Activated CD4-positive, alpha-beta T cell treated with anti-CD3 and anti-CD28 coated beads, Interleukin-2, amount 10 ng/mL, durations not matched to agents 24 days and 14 days (primary cell): ENCODE measurements at regions of chr20 and their contacts with region 1.

Region 1: GRCh38 chr20:35954200-35954906 is at the start of gene SCAND1:
- DNase-seq: peak; percentile 99
- H3K4me3 Mint-ChIP-seq: peak within 1 kb of the TSS; percentile 100
- H3K27ac Mint-ChIP-seq: peak within 1 kb of the TSS; percentile 100
- H3K4me1 Mint-ChIP-seq: peaks cover 14% of the 10 kb centered on the region
- H3K27me3 Mint-ChIP-seq: peaks cover 5% of the 10 kb centered on the region
- total RNA-seq, gene SCAND1: 35.1 and 38.1 TPM in 2 replicates

Region 2: GRCh38 chr20:34363062-34363464 is 1591.3 kb before region 1 on chr20 and contains the start of gene ITCH:
- intact Hi-C with region 1: loop called (anchors 5 kb)
- DNase-seq: peak; percentile 98
- H3K4me3 Mint-ChIP-seq: peak within 1 kb of the TSS; percentile 95
- H3K27ac Mint-ChIP-seq: peak within 1 kb of the TSS; percentile 98
- H3K4me1 Mint-ChIP-seq: peaks cover 33% of the 10 kb centered on the region
- H3K27me3 Mint-ChIP-seq: no peaks in the 10 kb centered on the region
- total RNA-seq, gene ITCH: 55.6 and 55.7 TPM in 2 replicates

Region 3: DNA sequence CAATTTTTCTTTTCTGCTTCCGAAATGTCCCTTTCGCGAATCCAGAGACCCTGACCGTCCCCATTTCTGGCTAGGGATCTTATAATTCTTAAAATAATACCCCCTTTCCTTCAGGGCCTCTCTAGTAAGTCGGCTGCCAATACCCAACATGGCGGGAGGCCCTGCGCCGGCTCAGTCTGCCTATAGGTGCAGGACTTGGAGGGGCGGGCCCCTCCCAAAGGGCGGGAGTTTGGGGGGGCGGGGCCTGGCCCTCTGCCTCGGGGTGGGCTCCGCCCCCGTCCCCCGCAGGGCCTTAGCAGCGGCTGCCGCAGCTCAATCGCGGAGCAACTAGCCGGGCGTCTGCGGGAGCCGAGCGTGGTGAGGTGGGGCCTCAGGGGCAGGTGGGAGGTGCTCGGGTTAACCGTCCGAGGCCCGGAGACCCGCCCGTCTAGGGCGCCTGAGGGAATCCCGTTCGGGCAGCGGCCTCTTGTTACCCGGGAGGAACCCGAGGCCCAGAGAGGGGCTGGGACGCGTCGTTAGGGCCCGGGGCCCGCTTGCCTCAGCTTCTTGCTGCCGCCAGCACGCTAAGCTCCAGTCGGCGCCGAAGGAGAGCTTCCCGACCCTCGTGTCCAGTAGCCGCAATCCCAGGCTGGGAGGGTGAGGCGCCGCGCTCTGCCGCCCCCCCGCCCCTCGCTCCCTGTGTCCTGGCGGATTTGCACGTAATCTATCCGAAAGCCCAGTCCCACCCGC is 499.3 kb before region 1 on chr20 and contains the start of gene CEP250:
- intact Hi-C with region 1: loop called (anchors 2 kb)
- DNase-seq: peak; percentile 97
- H3K4me3 Mint-ChIP-seq: peak within 1 kb of the TSS; percentile 92
- H3K27ac Mint-ChIP-seq: peak within 1 kb of the TSS; percentile 98
- H3K4me1 Mint-ChIP-seq: peaks cover 29% of the 10 kb centered on the region
- H3K27me3 Mint-ChIP-seq: no peaks in the 10 kb centered on the region
- total RNA-seq, gene CEP250: 46.8 and 48.8 TPM in 2 replicates

Region 4: GRCh38 chr20:35664544-35665221 is 289.7 kb before region 1 on chr20 and contains the starts of genes CPNE1 and RBM12:
- intact Hi-C with region 1: loop called (anchors 5 kb)
- DNase-seq: peak; percentile 98
- H3K4me3 Mint-ChIP-seq: peak within 1 kb of the TSS; percentile 91
- H3K27ac Mint-ChIP-seq: peak within 1 kb of the TSS; percentile 99
- H3K4me1 Mint-ChIP-seq: peaks cover 39% of the 10 kb centered on the region
- H3K27me3 Mint-ChIP-seq: no peaks in the 10 kb centered on the region
- total RNA-seq, gene CPNE1: 317 and 318 TPM in 2 replicates
- total RNA-seq, gene RBM12: 148 and 151 TPM in 2 replicates

Region 5: DNA sequence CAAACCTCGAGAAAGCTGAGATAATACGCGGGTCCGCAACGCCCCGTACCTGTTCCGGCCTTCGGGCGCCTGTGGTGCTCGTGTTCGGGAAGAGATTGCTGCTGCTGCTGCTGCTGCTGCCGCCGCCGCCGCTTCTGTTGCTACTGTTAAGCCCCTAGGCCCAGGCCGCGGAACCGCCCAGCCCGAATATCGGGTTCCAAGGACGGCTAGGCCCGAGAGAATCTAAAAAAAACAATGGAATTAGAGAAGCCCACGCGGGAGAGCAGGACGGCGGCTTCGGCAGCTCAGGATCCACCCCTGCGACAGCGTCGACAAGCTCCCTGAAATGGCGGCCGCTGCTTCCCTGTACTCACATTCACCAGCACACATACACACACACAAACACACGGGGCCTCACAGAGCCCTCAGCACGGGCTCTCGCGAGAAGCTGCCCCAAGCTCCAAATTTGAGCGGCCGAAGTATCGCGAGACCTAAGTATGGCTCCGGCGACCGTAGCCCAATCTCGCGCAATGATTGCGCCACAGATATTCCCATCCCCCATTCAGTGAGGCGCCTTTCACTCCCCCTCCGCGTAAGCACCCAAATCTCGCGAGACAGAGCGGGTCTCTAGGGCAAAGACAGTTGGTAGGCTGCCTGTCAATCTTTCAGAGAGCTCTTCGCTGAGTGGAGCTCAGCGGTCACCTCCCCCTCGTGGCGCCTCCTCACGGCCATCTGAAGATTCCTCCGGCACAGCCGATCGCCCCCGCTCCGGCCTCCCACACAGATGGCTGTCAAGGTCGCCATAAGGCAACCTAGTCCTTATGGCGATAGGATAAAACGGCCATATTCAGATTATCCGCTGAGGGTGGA is 212.2 kb before region 1 on chr20 and contains the start of gene RBM39:
- intact Hi-C with region 1: loop called (anchors 1 kb)
- DNase-seq: peak; percentile 100
- H3K4me3 Mint-ChIP-seq: peak within 1 kb of the TSS; percentile 91
- H3K27ac Mint-ChIP-seq: peak within 1 kb of the TSS; percentile 100
- H3K4me1 Mint-ChIP-seq: peaks cover 43% of the 10 kb centered on the region
- H3K27me3 Mint-ChIP-seq: peaks cover 4% of the 10 kb centered on the region
- total RNA-seq, gene RBM39: 352 and 354 TPM in 2 replicates

Region 6: DNA sequence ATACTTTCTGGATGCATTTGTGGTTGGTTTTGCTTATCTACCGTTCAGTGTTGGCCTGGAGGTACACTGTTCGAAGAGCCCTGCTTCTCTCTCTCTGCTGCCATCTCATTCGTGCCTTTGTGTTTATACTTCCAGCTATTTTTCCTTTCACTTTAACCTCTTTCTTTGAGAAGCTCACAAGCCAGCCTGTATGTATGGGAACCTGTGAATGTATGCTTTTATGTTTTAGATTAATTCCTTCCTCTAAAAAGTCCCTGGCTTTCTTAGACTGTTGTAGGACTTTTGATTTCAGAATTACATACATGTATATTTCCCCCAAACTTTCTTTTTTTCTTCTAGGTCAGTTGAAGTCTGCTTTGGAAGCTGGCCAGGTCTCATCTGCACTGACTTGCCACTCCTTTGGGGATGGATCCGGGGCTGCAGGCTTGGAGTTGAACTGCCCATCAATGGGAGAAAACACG is 83.0 kb before region 1 on chr20:
- intact Hi-C with region 1: no loop called
- DNase-seq: no peak
- H3K4me3 Mint-ChIP-seq: no peak overlapping the region
- H3K27ac Mint-ChIP-seq: peak overlapping the region; percentile 41
- H3K4me1 Mint-ChIP-seq: peaks cover 4% of the 10 kb centered on the region
- H3K27me3 Mint-ChIP-seq: no peaks in the 10 kb centered on the region

Region 7: GRCh38 chr20:35893942-35894341 is 60.4 kb before region 1 on chr20:
- intact Hi-C with region 1: loop called (anchors 10 kb)
- DNase-seq: peak; percentile 59
- H3K4me3 Mint-ChIP-seq: no peak overlapping the region
- H3K27ac Mint-ChIP-seq: no peak overlapping the region
- H3K4me1 Mint-ChIP-seq: peaks cover 12% of the 10 kb centered on the region
- H3K27me3 Mint-ChIP-seq: no peaks in the 10 kb centered on the region

Region 8: GRCh38 chr20:35994994-35995453 is 40.7 kb after region 1 on chr20:
- intact Hi-C with region 1: no loop called
- DNase-seq: peak; percentile 90
- H3K4me3 Mint-ChIP-seq: no peak overlapping the region
- H3K27ac Mint-ChIP-seq: no peak overlapping the region
- H3K4me1 Mint-ChIP-seq: peaks cover 2% of the 10 kb centered on the region
- H3K27me3 Mint-ChIP-seq: peaks cover 13% of the 10 kb centered on the region

Region 9: DNA sequence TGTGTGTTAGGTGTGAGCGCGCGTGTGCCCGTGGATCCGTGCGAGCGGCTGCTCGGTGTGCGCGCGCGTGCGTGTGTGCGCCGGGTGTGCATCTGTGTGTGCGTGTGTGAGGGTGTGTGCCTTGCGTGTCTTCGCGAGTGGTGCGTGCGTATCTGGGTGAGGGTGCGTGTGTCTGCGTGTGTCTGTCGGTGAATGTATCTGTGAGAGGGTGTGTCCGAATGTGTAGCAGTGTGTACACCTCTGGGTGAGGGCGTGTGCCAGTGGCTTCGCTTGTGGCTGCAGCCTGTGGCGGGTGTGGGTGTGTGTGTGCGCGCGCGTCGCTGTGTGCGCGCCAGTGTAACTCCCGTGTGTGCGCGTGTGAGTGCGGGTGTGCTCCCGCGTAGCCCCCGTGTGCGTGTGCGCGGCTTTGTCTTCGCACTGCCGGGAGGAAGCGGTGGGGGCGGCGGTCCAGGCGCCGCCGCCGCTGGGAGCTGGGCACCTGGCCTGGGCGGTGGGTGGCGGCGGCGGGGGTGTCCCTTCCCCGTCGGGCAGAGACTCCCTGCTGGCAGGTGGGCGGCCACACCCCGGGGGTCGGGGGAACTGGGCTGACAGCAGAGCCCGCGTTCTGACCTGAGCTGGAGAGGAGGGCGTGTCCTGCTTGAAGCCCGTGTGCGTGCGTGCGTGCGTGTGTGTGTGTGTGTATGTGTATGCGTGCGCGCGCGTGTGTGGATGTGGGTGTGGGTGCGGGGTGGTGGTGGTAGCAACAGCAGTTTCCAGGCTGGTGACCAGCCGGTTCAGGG is 138.9 kb after region 1 on chr20:
- intact Hi-C with region 1: no loop called
- DNase-seq: peak; percentile 72
- H3K4me3 Mint-ChIP-seq: peak overlapping the region; percentile 86
- H3K27ac Mint-ChIP-seq: no peak overlapping the region
- H3K4me1 Mint-ChIP-seq: peaks cover 15% of the 10 kb centered on the region
- H3K27me3 Mint-ChIP-seq: peaks cover 48% of the 10 kb centered on the region